ENCODE measurements at regions of chr16 and their contacts with region 1.

Region 1: GRCh38 chr16:23640931-23641765 is at the starts of genes DCTN5 and PALB2:
- DNase-seq: peak; percentile 92
- ATAC-seq: peak; percentile 99
- H3K4me3 ChIP-seq: peak within 1 kb of the TSS; percentile 80
- H3K27ac ChIP-seq: peak within 1 kb of the TSS; percentile 82
- H3K4me1 ChIP-seq: peaks cover 4% of the 10 kb centered on the region; the same call in 1 of the 2 replicates
- H3K27me3 ChIP-seq: no peaks in the 10 kb centered on the region
- CTCF ChIP-seq: no peak
- POLR2A ChIP-seq: peak; percentile 60
- RAD21 ChIP-seq: no peak
- total RNA-seq, gene DCTN5: 111 and 121 TPM in 2 replicates
- total RNA-seq, gene PALB2: 8.6 and 11.7 TPM in 2 replicates

Region 2: DNA sequence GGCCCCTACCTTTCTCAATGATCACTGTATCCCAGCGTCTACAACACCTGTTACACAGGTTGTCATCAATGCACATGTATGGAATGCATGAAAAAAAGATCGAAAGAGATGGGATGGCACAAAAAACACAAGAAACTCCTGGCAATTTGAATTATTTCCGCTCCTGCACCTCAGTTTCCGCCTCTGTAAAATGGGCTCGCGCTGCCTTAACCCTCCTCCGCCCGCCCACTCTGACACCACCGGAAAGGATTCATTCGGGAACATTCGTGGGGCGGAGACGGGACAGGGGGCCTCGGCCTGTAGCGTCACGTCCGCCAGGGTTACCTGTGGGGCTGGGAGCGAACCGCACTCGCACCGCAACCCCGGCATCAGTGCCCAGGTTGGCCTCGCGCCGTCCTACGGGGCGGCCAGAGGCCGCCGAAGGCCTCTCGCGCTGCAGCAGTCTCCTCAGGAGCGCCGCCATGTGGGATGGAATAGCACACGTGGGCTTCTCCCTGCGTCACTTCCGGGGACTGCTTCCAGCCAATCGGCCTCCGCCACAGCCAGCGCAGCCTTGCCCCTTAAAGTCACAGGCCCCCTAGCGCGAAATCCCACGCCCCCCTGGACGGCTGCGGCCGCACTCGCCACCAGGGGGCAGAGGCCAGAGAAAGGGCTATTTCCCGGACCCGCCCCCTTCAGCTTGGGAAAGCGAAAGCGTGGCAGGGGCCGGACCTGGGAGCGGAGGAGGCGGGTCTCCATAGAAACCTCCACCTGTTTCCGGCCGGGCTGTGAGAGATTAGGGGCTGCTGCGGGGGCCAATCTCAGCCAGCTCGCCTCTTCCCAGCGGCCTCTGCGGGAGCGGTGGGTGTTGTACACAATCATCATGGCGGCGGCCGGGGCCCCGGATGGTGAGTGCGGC is 84.0 kb before region 1 on chr16 and contains the starts of genes EARS2 and UBFD1:
- CTCF ChIA-PET with region 1: no interaction called
- POLR2A ChIA-PET with region 1: no interaction called
- dilution Hi-C with region 1: no loop called
- in situ Hi-C with region 1: no loop called
- intact Hi-C with region 1: loop called (anchors 5 kb)
- DNase-seq: peak; percentile 98
- ATAC-seq: peak; percentile 96
- H3K4me3 ChIP-seq: peak within 1 kb of the TSS; percentile 67
- H3K27ac ChIP-seq: peak within 1 kb of the TSS; percentile 80
- H3K4me1 ChIP-seq: no peaks in the 10 kb centered on the region
- H3K27me3 ChIP-seq: no peaks in the 10 kb centered on the region
- CTCF ChIP-seq: peak; percentile 98
- POLR2A ChIP-seq: peak; percentile 94
- RAD21 ChIP-seq: peak; percentile 43
- total RNA-seq, gene EARS2: 23.3 and 28.1 TPM in 2 replicates
- total RNA-seq, gene UBFD1: 39.3 and 48.9 TPM in 2 replicates

Region 3: DNA sequence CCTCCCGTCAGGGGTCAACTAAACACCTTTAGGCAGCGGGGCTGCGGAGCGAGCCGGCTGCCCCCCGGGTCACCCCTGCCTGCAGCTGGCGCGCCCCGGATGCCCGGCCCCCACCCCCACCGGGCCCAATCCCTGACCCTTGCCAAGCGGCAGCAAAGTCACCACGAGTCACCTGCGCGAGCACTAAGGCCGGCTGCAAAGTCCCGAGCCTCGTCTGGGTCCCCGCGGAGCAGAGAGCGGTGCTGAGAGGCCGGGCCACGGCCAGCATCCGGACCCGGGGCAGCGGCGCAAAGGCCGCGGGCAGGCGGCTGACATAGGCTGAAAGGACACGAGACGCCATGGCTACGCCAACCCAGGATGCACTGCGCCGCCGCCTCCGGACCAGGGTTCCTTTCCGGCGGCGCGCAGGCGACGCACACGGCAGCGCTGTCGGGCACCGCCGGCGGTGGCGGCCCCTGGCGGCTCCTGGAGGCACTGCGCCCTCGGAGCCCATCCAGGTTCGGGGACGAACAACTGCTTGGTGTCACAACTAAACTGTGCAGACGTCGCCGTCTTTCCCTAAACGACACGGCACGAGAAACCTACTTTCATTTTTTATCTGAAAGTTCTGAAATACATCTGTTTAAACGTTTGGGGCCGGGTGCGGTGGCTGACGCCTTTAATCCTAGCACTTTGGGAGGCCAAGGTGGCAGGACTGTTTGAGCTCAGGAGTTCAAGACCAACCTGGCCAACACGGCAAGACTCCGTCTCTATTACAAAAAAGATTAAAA is 45.0 kb before region 1 on chr16 and contains the start of gene NDUFAB1:
- CTCF ChIA-PET with region 1: no interaction called
- POLR2A ChIA-PET with region 1: no interaction called
- dilution Hi-C with region 1: no loop called
- in situ Hi-C with region 1: no loop called
- intact Hi-C with region 1: loop called (anchors 2 kb)
- DNase-seq: peak; percentile 83
- ATAC-seq: peak; percentile 100
- H3K4me3 ChIP-seq: peak within 1 kb of the TSS; percentile 100
- H3K27ac ChIP-seq: peak within 1 kb of the TSS; percentile 92
- H3K4me1 ChIP-seq: peaks cover 3% of the 10 kb centered on the region; the same call in 1 of the 2 replicates
- H3K27me3 ChIP-seq: no peaks in the 10 kb centered on the region
- CTCF ChIP-seq: peak; percentile 98
- POLR2A ChIP-seq: peak; percentile 61; the same call in 1 of the 2 replicates
- RAD21 ChIP-seq: peak; percentile 52
- total RNA-seq, gene NDUFAB1: 114 and 117 TPM in 2 replicates

Region 4: GRCh38 chr16:23729503-23730424 is 88.6 kb after region 1 on chr16:
- CTCF ChIA-PET with region 1: no interaction called
- POLR2A ChIA-PET with region 1: no interaction called
- dilution Hi-C with region 1: no loop called
- in situ Hi-C with region 1: no loop called
- intact Hi-C with region 1: loop called (anchors 1 kb)
- DNase-seq: peak; percentile 48
- ATAC-seq: peak; percentile 53
- H3K4me3 ChIP-seq: no peak overlapping the region
- H3K27ac ChIP-seq: no peak overlapping the region
- H3K4me1 ChIP-seq: no peaks in the 10 kb centered on the region
- H3K27me3 ChIP-seq: no peaks in the 10 kb centered on the region
- CTCF ChIP-seq: no peak
- POLR2A ChIP-seq: no peak
- RAD21 ChIP-seq: no peak

Region 5: GRCh38 chr16:23826528-23827045 is 185.4 kb after region 1 on chr16:
- CTCF ChIA-PET with region 1: no interaction called
- POLR2A ChIA-PET with region 1: no interaction called
- dilution Hi-C with region 1: no loop called
- in situ Hi-C with region 1: no loop called
- intact Hi-C with region 1: no loop called
- DNase-seq: no peak
- ATAC-seq: no peak
- H3K4me3 ChIP-seq: no peak overlapping the region
- H3K27ac ChIP-seq: no peak overlapping the region
- H3K4me1 ChIP-seq: no peaks in the 10 kb centered on the region
- H3K27me3 ChIP-seq: no peaks in the 10 kb centered on the region
- CTCF ChIP-seq: no peak
- POLR2A ChIP-seq: no peak
- RAD21 ChIP-seq: no peak

Measured in IMR-90 (cell line).